Left cardiac atrium (tissue), 4 donors: ENCODE measurements at regions of chr2 and their contacts with region 1.

Region 1: GRCh38 chr2:197453161-197453914 is at the start of gene COQ10B:
- DNase-seq: peak; percentile 100
- ATAC-seq: peak; percentile 98
- total RNA-seq, gene COQ10B: 23.0 to 43.4 TPM

Region 2: GRCh38 chr2:197378494-197379307 is 74.6 kb before region 1 on chr2:
- intact Hi-C with region 1: no loop called
- DNase-seq: peak; percentile 37
- ATAC-seq: peak; percentile 72 to 85

Region 3: GRCh38 chr2:197434541-197435513 is 18.5 kb before region 1 on chr2 and contains the start of gene SF3B1:
- intact Hi-C with region 1: loop called in 1 of 2 experiments (anchors 2 kb)
- DNase-seq: peak; percentile 98
- ATAC-seq: peak; percentile 97 to 98
- total RNA-seq, gene SF3B1: 136 to 157 TPM

Region 4: GRCh38 chr2:197487385-197487784 is 34.0 kb after region 1 on chr2:
- intact Hi-C with region 1: no loop called
- DNase-seq: no peak
- ATAC-seq: no peak